HCT116 (cell line): ENCODE measurements at regions of chr10 and their contacts with region 1.

Region 1: GRCh38 chr10:28241741-28242399 is 61.0 kb downstream of the MPP7 start:
- DNase-seq: peak; percentile 68
- ATAC-seq: peak; percentile 92
- H3K4me3 ChIP-seq: no peak overlapping the region
- H3K27ac ChIP-seq: peak overlapping the region; percentile 96
- H3K4me1 ChIP-seq: peaks cover 68 to 77% of the 10 kb centered on the region in 2 experiments
- H3K27me3 ChIP-seq: no peaks in the 10 kb centered on the region
- CTCF ChIP-seq: peak; percentile 80 to 97 (median 84)
- POLR2A ChIP-seq: no peak
- RAD21 ChIP-seq: peak; percentile 98

Region 2: DNA sequence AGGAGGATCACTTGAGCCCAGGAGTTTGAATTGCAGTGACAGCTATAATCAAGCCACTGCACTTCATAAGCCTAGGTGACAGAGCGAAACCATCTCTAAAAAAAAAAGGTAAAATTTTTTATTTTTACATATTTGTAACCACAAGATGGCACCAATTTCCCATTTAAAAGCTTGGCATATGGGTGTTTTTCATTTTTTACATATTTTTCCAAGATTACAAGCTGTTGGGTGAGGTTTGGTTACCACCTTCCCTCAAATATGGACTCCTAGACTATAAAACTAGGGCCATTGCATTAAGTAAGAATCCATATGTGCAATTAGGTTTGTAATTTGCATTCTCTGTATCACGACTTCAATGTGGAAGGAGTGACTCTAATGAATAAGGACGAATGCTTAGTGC is 872.0 kb before region 1 on chr10:
- CTCF ChIA-PET with region 1: interaction called, 7 read pairs
- POLR2A ChIA-PET with region 1: no interaction called
- RAD21 ChIA-PET with region 1: interaction called in 1 of 2 experiments, 3 read pairs
- intact Hi-C with region 1: loop called (anchors 5 kb)
- DNase-seq: no peak
- ATAC-seq: peak; percentile 54
- H3K4me3 ChIP-seq: no peak overlapping the region
- H3K27ac ChIP-seq: no peak overlapping the region
- H3K4me1 ChIP-seq: no peaks in the 10 kb centered on the region
- H3K27me3 ChIP-seq: no peaks in the 10 kb centered on the region
- CTCF ChIP-seq: peak in 2 of 3 experiments; percentile 38 to 40; a peak in 3 of 6 replicates
- POLR2A ChIP-seq: no peak
- RAD21 ChIP-seq: peak; percentile 71

Region 3: DNA sequence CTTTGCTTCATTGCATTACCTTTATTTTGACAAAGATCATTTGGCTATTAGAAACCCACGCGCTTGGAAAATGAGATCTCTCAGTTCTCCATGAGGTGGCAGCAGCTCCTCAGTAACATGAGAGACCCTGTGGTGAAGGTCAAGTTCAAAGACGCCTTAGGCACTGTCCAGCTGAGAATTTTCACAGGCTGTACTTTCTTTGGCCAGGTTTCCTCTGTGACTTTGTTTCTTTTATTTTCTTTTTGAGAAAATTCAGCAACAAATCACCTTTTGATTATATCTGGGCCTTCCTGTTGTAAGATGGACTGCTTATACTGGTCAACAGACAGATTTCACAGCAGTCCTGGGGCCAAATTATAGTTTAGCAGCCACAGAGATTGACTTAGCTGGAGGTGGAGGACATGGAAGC is 683.3 kb before region 1 on chr10:
- CTCF ChIA-PET with region 1: interaction called, 9 read pairs
- POLR2A ChIA-PET with region 1: no interaction called
- RAD21 ChIA-PET with region 1: interaction called in 1 of 2 experiments, 4 read pairs
- intact Hi-C with region 1: loop called (anchors 1 kb)
- DNase-seq: peak; percentile 58
- ATAC-seq: peak; percentile 87
- H3K4me3 ChIP-seq: no peak overlapping the region
- H3K27ac ChIP-seq: no peak overlapping the region; the same call in 1 of the 2 replicates
- H3K4me1 ChIP-seq: peaks cover 0 to 8% of the 10 kb centered on the region in 2 experiments; a peak in 2 of 4 replicates
- H3K27me3 ChIP-seq: no peaks in the 10 kb centered on the region
- CTCF ChIP-seq: peak; percentile 70 to 85 (median 76); a peak in 5 of 6 replicates
- POLR2A ChIP-seq: no peak
- RAD21 ChIP-seq: peak; percentile 93

Region 4: GRCh38 chr10:27742195-27743011 is 499.5 kb before region 1 on chr10:
- CTCF ChIA-PET with region 1: interaction called, 11 read pairs
- POLR2A ChIA-PET with region 1: interaction called, 4 read pairs
- RAD21 ChIA-PET with region 1: no interaction called
- intact Hi-C with region 1: loop called (anchors 2 kb)
- DNase-seq: peak; percentile 67
- ATAC-seq: peak; percentile 78
- H3K4me3 ChIP-seq: peak overlapping the region; percentile 46 to 57
- H3K27ac ChIP-seq: peak overlapping the region; percentile 97
- H3K4me1 ChIP-seq: peaks cover 13 to 17% of the 10 kb centered on the region in 2 experiments; a peak in 3 of 4 replicates
- H3K27me3 ChIP-seq: no peaks in the 10 kb centered on the region
- CTCF ChIP-seq: peak; percentile 31 to 63 (median 59); a peak in 5 of 6 replicates
- POLR2A ChIP-seq: no peak
- RAD21 ChIP-seq: peak; percentile 68

Region 5: GRCh38 chr10:28120043-28120749 is 121.7 kb before region 1 on chr10:
- CTCF ChIA-PET with region 1: interaction called, 6 read pairs
- POLR2A ChIA-PET with region 1: no interaction called
- RAD21 ChIA-PET with region 1: no interaction called
- intact Hi-C with region 1: loop called (anchors 10 kb)
- DNase-seq: peak; percentile 90
- ATAC-seq: peak; percentile 39
- H3K4me3 ChIP-seq: peak overlapping the region in 1 of 2 experiments; percentile 8; a peak in 1 of 4 replicates
- H3K27ac ChIP-seq: peak overlapping the region; percentile 96
- H3K4me1 ChIP-seq: peaks cover 75 to 94% of the 10 kb centered on the region in 2 experiments
- H3K27me3 ChIP-seq: no peaks in the 10 kb centered on the region
- CTCF ChIP-seq: no peak
- POLR2A ChIP-seq: no peak
- RAD21 ChIP-seq: peak; percentile 22; the same call in 1 of the 2 replicates

Region 6: GRCh38 chr10:28169525-28169924 is 72.3 kb before region 1 on chr10:
- CTCF ChIA-PET with region 1: no interaction called
- POLR2A ChIA-PET with region 1: no interaction called
- RAD21 ChIA-PET with region 1: no interaction called
- intact Hi-C with region 1: no loop called
- DNase-seq: no peak
- ATAC-seq: no peak
- H3K4me3 ChIP-seq: no peak overlapping the region
- H3K27ac ChIP-seq: peak overlapping the region; percentile 11; the same call in 1 of the 2 replicates
- H3K4me1 ChIP-seq: peaks cover 24 to 40% of the 10 kb centered on the region in 2 experiments
- H3K27me3 ChIP-seq: no peaks in the 10 kb centered on the region
- CTCF ChIP-seq: no peak
- POLR2A ChIP-seq: no peak
- RAD21 ChIP-seq: no peak

Region 7: DNA sequence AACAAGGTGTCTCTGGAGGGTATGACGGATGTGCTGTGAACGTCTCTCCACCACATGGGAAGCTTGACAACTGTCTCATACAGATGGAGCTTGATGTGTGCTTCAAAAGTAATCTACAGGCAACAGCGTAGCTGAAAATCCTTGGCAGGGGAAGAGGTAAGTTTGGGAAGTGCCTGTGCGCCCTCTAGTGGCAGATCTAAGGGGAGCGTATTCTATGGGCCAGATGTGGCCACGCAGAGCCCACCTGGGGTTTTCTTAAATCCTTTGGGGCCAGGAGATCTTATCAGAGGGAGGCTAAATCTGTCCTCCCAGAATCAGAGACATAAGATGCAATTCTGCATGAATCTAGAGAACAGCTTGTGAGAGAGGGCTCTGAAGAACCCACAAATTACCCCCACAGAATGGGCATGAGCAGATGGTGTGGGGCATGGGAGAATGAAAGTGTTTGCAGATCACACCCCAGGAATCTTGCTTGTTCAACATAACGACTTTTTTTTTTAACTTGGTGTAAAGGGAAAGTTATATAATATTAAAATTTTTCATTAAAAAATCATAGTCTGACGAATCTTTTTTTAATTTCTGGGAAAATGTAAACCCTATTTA is 152.2 kb after region 1 on chr10:
- CTCF ChIA-PET with region 1: interaction called, 13 read pairs
- POLR2A ChIA-PET with region 1: no interaction called
- RAD21 ChIA-PET with region 1: no interaction called
- intact Hi-C with region 1: no loop called
- DNase-seq: peak; percentile 69
- ATAC-seq: peak; percentile 94
- H3K4me3 ChIP-seq: peak overlapping the region in 1 of 2 experiments; percentile 33; a peak in 1 of 4 replicates
- H3K27ac ChIP-seq: peak overlapping the region; percentile 30
- H3K4me1 ChIP-seq: peaks cover 16 to 24% of the 10 kb centered on the region in 2 experiments; a peak in 3 of 4 replicates
- H3K27me3 ChIP-seq: no peaks in the 10 kb centered on the region
- CTCF ChIP-seq: peak; percentile 67 to 95 (median 94)
- POLR2A ChIP-seq: no peak
- RAD21 ChIP-seq: peak; percentile 89